BJ (cell line): ENCODE measurements at regions of chr1 and their contacts with region 1.

Region 1: DNA sequence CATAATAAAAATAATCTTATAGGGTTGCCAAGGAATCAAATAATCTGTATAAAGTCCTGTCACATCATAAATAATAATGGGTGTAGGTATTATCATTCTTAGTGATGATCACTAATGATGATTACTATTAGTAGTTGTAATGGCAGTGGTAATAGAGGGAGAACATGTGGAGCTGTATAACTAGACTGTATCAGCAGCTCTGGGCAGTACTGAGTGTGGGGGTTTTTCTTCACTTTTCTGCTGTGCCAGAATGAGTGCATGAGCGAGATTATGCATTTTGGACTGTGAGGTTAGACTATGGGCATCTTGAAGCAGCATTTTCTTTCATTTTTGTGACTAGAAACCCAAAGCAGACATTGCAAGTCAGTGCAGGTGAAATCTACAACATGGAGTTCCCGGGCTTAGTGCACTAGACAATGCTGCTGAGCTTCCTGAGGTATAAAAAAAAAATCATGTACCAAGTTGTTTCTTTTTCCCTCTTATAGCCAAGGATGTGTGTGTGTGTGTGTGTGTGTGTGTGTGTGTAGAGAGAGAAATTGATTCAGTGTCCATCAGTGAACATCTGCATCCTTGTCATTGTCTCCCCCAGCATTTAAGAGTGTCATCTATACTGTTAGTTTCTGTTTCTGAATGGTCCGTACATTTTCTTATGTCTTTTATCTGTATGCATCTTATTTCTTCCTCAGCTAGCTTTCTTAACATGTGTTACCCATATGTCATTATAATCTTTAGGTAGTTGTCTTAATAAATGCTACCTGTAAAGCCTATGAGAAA is 86.6 kb downstream of the GIPC2 start:
- DNase-seq: no peak
- H3K4me3 ChIP-seq: no peak overlapping the region
- H3K27me3 ChIP-seq: no peaks in the 10 kb centered on the region
- CTCF ChIP-seq: no peak

Region 2: GRCh38 chr1:77825131-77825709 is 307.1 kb before region 1 on chr1:
- CTCF ChIA-PET with region 1: no interaction called
- POLR2A ChIA-PET with region 1: no interaction called
- DNase-seq: peak; percentile 27
- H3K4me3 ChIP-seq: no peak overlapping the region
- H3K27me3 ChIP-seq: no peaks in the 10 kb centered on the region
- CTCF ChIP-seq: peak; percentile 34; the same call in 1 of the 2 replicates

Region 3: DNA sequence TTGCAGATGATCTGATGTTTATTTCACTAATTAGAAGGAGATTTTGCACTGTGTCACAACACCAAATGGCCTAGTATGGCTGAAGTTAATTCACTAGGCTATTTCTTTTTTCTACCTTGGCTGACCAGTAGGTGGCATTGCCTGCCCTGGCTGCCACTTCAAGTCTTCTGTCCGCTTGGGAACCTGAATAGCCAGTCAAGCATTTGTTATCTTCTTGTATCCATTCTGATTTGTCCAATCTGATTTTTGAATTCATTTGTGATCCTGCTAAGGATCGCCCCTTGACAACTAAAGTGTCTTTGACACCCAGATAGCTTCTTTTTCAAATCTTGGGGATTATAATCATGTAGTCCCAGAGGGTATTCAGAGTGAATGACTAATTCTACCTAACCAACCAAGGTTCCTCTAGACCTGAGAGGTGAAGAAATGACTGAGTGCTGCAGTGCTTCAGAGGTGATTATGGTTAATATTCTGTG is 12.8 kb after region 1 on chr1:
- CTCF ChIA-PET with region 1: interaction called, 15 read pairs
- POLR2A ChIA-PET with region 1: no interaction called
- DNase-seq: no peak
- H3K4me3 ChIP-seq: no peak overlapping the region
- H3K27me3 ChIP-seq: peaks cover 2% of the 10 kb centered on the region; the same call in 1 of the 2 replicates
- CTCF ChIP-seq: peak; percentile 83